ENCODE measurements at regions of chr20 and their contacts with region 1.

Region 1: GRCh38 chr20:35883778-35884540 is 70.3 kb downstream of the SCAND1 start:
- DNase-seq: peak; percentile 73 to 86
- ATAC-seq: peak; percentile 82 to 87
- H3K4me3 ChIP-seq: no peak overlapping the region
- H3K27ac ChIP-seq: peak overlapping the region; percentile 78 to 92 (median 84)
- H3K4me1 ChIP-seq: peaks cover 25 to 40% of the 10 kb centered on the region in 2 donors
- H3K27me3 ChIP-seq: no peaks in the 10 kb centered on the region
- CTCF ChIP-seq: peak; percentile 78 to 83 (median 82)
- POLR2A ChIP-seq: peak; percentile 7 to 25

Region 2: GRCh38 chr20:35463455-35464300 is 420.3 kb before region 1 on chr20:
- in situ Hi-C with region 1: no loop called
- intact Hi-C with region 1: loop called (anchors 5 kb)
- DNase-seq: peak; percentile 14 to 35
- ATAC-seq: peak; percentile 69 to 72
- H3K4me3 ChIP-seq: no peak overlapping the region
- H3K27ac ChIP-seq: peak overlapping the region in 1 of 4 donors; percentile 19
- H3K4me1 ChIP-seq: peaks cover 13 to 25% of the 10 kb centered on the region in 2 donors
- H3K27me3 ChIP-seq: no peaks in the 10 kb centered on the region
- CTCF ChIP-seq: peak; percentile 60 to 77 (median 72)
- POLR2A ChIP-seq: no peak

Region 3: GRCh38 chr20:35664544-35665221 is 219.3 kb before region 1 on chr20 and contains the starts of genes CPNE1 and RBM12:
- in situ Hi-C with region 1: no loop called
- intact Hi-C with region 1: loop called (anchors 1 kb)
- DNase-seq: peak; percentile 87 to 90
- ATAC-seq: peak; percentile 93 to 95
- H3K4me3 ChIP-seq: peak within 1 kb of the TSS; percentile 73 to 97 (median 74)
- H3K27ac ChIP-seq: peak within 1 kb of the TSS; percentile 93 to 98 (median 98)
- H3K4me1 ChIP-seq: peaks cover 35 to 41% of the 10 kb centered on the region in 2 donors
- H3K27me3 ChIP-seq: no peaks in the 10 kb centered on the region
- CTCF ChIP-seq: no peak
- POLR2A ChIP-seq: peak; percentile 91 to 92
- total RNA-seq, gene CPNE1: 37.3 to 60.7 (median 50.1) TPM
- total RNA-seq, gene RBM12: 9.8 to 23.7 (median 20.7) TPM

Region 4: GRCh38 chr20:35718972-35719635 is 164.9 kb before region 1 on chr20:
- in situ Hi-C with region 1: loop called in 1 of 4 experiments (anchors 25 kb)
- intact Hi-C with region 1: loop called (anchors 5 kb)
- DNase-seq: peak in 1 of 2 donors; percentile 41
- ATAC-seq: peak in 1 of 2 donors; percentile 18
- H3K4me3 ChIP-seq: no peak overlapping the region
- H3K27ac ChIP-seq: peak overlapping the region; percentile 64 to 80 (median 72)
- H3K4me1 ChIP-seq: peaks cover 37 to 56% of the 10 kb centered on the region in 2 donors
- H3K27me3 ChIP-seq: no peaks in the 10 kb centered on the region
- CTCF ChIP-seq: no peak
- POLR2A ChIP-seq: no peak

Region 5: DNA sequence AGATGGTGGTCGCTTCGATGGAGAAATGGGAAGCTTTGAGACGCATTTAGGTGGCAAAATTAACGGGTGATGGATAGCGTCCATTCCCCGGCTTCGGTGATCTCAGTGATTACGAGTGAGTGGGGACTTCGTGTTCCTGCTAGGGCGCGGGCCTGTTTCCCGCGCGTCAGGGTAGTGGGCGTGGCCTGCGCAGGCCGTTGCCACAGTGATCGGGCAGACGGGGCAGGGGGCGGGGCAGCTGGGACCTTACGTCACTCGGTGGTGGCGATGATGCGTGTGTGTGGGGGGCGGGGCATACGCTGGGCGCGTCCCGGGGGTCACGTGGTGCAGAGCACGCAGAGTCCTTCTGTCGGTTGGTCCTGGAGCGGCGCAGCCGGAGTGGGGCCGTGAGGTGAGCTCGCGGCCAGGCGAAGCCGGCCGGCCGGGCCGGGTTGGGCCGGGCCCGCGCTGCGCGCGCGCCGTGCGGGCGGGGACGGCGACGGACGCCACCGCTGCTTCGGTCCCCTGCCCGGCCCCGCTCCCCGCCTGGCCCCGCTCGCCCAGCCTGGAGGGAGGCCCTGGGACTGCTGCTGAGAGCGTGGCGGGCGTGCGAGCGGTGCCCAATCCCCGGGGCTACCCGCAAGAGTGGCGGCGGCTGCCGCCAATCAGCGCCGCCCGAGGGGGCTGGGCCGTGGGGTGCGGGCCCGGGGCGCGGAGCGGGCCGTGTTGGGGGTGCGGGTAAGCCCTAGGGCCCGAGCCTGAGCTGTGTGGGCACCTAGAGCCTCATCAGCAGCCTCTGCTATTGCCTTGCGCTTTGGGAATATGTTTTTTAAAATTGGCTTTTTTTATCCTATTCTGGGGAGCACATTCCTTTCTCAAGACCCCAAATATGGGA is 112.0 kb before region 1 on chr20 and contains the start of gene PHF20:
- in situ Hi-C with region 1: no loop called
- intact Hi-C with region 1: loop called (anchors 1 kb)
- DNase-seq: peak; percentile 99
- ATAC-seq: peak; percentile 72 to 78
- H3K4me3 ChIP-seq: peak within 1 kb of the TSS; percentile 67 to 80 (median 72)
- H3K27ac ChIP-seq: peak within 1 kb of the TSS; percentile 85 to 95 (median 91)
- H3K4me1 ChIP-seq: peaks cover 78% of the 10 kb centered on the region in 2 donors
- H3K27me3 ChIP-seq: no peaks in the 10 kb centered on the region
- CTCF ChIP-seq: peak in 4 of 5 experiments; percentile 22 to 52 (median 36)
- POLR2A ChIP-seq: peak; percentile 98 to 99
- total RNA-seq, gene PHF20: 72.6 to 91.9 (median 82.2) TPM

Region 6: GRCh38 chr20:36217226-36217625 is 333.3 kb after region 1 on chr20:
- in situ Hi-C with region 1: no loop called
- intact Hi-C with region 1: no loop called
- DNase-seq: no peak
- ATAC-seq: no peak
- H3K4me3 ChIP-seq: no peak overlapping the region
- H3K27ac ChIP-seq: no peak overlapping the region
- H3K4me1 ChIP-seq: no peaks in the 10 kb centered on the region
- H3K27me3 ChIP-seq: no peaks in the 10 kb centered on the region
- CTCF ChIP-seq: no peak
- POLR2A ChIP-seq: no peak